ENCODE measurements at regions of chr3 and their contacts with region 1.

Region 1: DNA sequence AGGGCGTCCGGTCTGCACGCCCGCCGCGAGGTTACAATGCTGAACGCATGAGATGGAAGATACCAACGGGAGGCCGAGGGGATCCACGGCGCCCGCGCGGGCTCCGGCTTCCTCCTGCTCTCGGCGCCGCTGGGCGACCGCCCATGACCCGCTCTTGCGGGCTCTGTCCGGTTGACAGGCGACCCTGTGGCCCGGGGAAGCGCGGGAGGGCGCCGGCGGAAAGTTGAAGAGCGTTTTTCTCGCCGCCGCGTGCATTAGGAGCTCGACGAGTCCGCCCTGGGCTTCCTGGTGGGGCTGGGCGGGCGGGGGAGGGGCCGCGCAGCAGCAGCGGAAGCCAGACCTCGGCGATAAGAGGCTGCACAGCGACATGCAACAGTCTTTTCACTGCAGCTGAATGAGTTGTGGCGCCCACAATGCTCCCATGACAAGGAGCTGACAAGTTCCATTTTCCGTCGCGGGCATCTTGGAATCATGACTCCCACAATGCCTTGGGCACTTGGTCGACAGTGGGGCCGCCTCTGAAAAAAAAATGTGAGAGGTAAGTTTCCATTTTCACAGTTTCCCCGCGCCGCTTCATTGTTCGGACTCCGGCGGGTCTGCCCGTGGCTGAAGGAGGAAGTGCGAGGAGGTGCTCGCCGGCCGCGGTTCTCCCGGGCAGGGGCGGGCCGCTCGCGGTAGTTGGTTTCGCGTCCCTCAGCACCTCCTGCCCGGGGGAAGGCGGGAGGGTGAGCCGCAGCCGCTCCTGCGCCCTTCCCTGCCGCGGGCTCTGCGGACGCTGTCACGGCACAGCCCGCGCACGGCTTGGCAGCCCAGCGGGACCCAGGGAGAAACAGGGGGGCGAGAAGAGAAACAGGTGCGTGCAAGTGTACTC is at the start of gene MBNL1:
- DNase-seq: peak; percentile 36 to 88
- ATAC-seq: peak; percentile 79
- H3K4me3 ChIP-seq: peak within 1 kb of the TSS; percentile 65
- H3K27ac ChIP-seq: peak within 1 kb of the TSS; percentile 96 to 98
- H3K4me1 ChIP-seq: peaks cover 50% of the 10 kb centered on the region
- CTCF ChIP-seq: no peak
- EP300 ChIP-seq: no peak
- POLR2A ChIP-seq: peak; percentile 87
- RAD21 ChIP-seq: peak in 1 of 2 experiments; percentile 45; a peak in 2 of 5 replicates
- polyA plus RNA-seq, gene MBNL1: 92.5 and 114 TPM in 2 replicates

Region 2: GRCh38 chr3:152039887-152040286 is 228.9 kb before region 1 on chr3:
- CTCF ChIA-PET with region 1: no interaction called
- POLR2A ChIA-PET with region 1: no interaction called
- DNase-seq: no peak
- ATAC-seq: no peak
- H3K4me3 ChIP-seq: no peak overlapping the region
- H3K27ac ChIP-seq: no peak overlapping the region
- H3K4me1 ChIP-seq: no peaks in the 10 kb centered on the region
- CTCF ChIP-seq: no peak
- EP300 ChIP-seq: no peak
- POLR2A ChIP-seq: no peak
- RAD21 ChIP-seq: no peak

Region 3: GRCh38 chr3:152258448-152259393 is 10.1 kb before region 1 on chr3:
- CTCF ChIA-PET with region 1: interaction called, 4 read pairs
- POLR2A ChIA-PET with region 1: interaction called, 12 read pairs
- DNase-seq: peak; percentile 81 to 93
- ATAC-seq: peak; percentile 95 to 99
- H3K4me3 ChIP-seq: peak overlapping the region; percentile 12; the same call in 2 of the 3 replicates
- H3K27ac ChIP-seq: peak overlapping the region; percentile 46 to 64
- H3K4me1 ChIP-seq: peaks cover 29% of the 10 kb centered on the region
- CTCF ChIP-seq: no peak
- EP300 ChIP-seq: peak; percentile 49 to 60; a peak in 3 of 5 replicates
- POLR2A ChIP-seq: no peak
- RAD21 ChIP-seq: peak in 1 of 2 experiments; percentile 5; a peak in 2 of 5 replicates

Region 4: GRCh38 chr3:152382312-152383135 is 113.7 kb after region 1 on chr3:
- CTCF ChIA-PET with region 1: no interaction called
- POLR2A ChIA-PET with region 1: interaction called, 19 read pairs
- DNase-seq: no peak
- ATAC-seq: peak; percentile 58 to 70; a peak in 5 of 6 replicates
- H3K4me3 ChIP-seq: peak overlapping the region; percentile 35
- H3K27ac ChIP-seq: peak overlapping the region; percentile 77 to 79
- H3K4me1 ChIP-seq: peaks cover 78% of the 10 kb centered on the region
- CTCF ChIP-seq: no peak
- EP300 ChIP-seq: no peak
- POLR2A ChIP-seq: no peak
- RAD21 ChIP-seq: no peak

Measured in A549 (cell line).